Activated naive CD8-positive, alpha-beta T cell treated with anti-CD3 and anti-CD28 coated beads, Interleukin-2, amount 10 ng/mL, durations not matched to agents 7 days and 5 days (primary cell): ENCODE measurements at regions of chr1 and their contacts with region 1.

Region 1: GRCh38 chr1:8878448-8879347 is at the start of gene ENO1:
- DNase-seq: peak; percentile 100
- ATAC-seq: peak; percentile 80
- H3K4me3 Mint-ChIP-seq: peak within 1 kb of the TSS; percentile 96
- H3K27ac Mint-ChIP-seq: peak within 1 kb of the TSS; percentile 98
- H3K4me1 Mint-ChIP-seq: peaks cover 30% of the 10 kb centered on the region
- H3K27me3 Mint-ChIP-seq: no peaks in the 10 kb centered on the region
- total RNA-seq, gene ENO1: 2,428 to 2,545 TPM

Region 2: GRCh38 chr1:8789314-8790214 is 89.1 kb before region 1 on chr1:
- POLR2A ChIA-PET with region 1: no interaction called
- DNase-seq: no peak
- ATAC-seq: no peak
- H3K4me3 Mint-ChIP-seq: no peak overlapping the region
- H3K27ac Mint-ChIP-seq: no peak overlapping the region
- H3K4me1 Mint-ChIP-seq: peaks cover 3% of the 10 kb centered on the region
- H3K27me3 Mint-ChIP-seq: no peaks in the 10 kb centered on the region

Region 3: DNA sequence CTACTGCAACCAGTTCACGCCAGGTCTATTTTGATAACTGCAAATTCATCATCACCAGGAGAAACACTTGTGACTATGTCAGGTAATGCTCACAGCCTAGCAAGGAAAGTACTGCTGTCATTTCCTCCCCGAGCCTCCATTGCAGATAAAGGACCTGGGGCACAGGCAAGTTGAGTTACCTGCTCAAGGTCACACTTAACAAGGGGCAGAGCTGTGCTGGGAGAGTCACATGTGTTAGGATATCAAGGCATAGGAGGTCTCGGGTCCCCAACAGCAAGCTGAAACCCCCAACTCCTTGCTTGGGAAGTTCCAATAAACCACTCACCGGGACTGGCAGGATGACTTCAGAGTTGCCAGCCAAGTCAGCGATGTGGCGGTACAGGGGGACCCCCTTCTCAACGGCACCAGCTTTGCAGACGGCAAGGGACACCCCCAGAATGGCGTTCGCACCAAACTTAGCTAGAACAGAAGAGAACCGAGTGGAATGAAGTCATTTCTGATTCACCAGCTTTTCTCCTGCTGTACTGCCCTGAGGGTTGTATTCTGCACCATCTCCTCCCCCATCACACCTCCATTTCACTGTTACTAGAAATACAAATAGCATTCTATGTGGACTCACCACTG is 11.8 kb before region 1 on chr1:
- POLR2A ChIA-PET with region 1: interaction called, 22 read pairs
- DNase-seq: no peak
- ATAC-seq: no peak
- H3K4me3 Mint-ChIP-seq: peak overlapping the region; percentile 20
- H3K27ac Mint-ChIP-seq: peak overlapping the region; percentile 79
- H3K4me1 Mint-ChIP-seq: peaks cover 51% of the 10 kb centered on the region
- H3K27me3 Mint-ChIP-seq: no peaks in the 10 kb centered on the region

Region 4: DNA sequence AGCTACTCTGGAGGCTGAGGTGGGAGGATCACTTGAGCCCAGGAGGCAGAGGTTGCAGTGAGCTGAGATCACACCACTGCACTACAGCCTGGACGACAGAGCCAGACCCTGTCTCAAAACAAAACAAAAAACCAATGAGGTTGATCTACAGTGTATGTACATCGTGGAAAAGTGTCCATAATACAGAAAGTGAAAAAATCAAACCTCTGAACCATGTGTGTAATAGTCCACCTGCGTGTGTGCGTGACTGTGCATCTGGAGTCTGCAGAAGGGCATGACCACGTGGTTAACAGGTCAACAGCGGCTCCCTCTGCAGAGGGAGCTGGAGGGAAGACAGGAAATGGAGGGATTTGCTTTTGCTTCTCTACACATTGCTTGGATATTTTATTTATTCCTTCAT is 32.2 kb after region 1 on chr1:
- POLR2A ChIA-PET with region 1: interaction called, 14 read pairs
- DNase-seq: no peak
- ATAC-seq: no peak
- H3K4me3 Mint-ChIP-seq: no peak overlapping the region
- H3K27ac Mint-ChIP-seq: peak overlapping the region; percentile 79
- H3K4me1 Mint-ChIP-seq: peaks cover 47% of the 10 kb centered on the region
- H3K27me3 Mint-ChIP-seq: no peaks in the 10 kb centered on the region

Region 5: GRCh38 chr1:8941906-8942305 is 63.2 kb after region 1 on chr1:
- POLR2A ChIA-PET with region 1: interaction called, 95 read pairs
- DNase-seq: no peak
- ATAC-seq: no peak
- H3K4me3 Mint-ChIP-seq: peak overlapping the region; percentile 83
- H3K27ac Mint-ChIP-seq: peak overlapping the region; percentile 93
- H3K4me1 Mint-ChIP-seq: peaks cover 83% of the 10 kb centered on the region
- H3K27me3 Mint-ChIP-seq: no peaks in the 10 kb centered on the region

Region 6: GRCh38 chr1:8987881-8988617 is 109.4 kb after region 1 on chr1:
- POLR2A ChIA-PET with region 1: interaction called, 23 read pairs
- DNase-seq: peak; percentile 85
- ATAC-seq: peak; percentile 53
- H3K4me3 Mint-ChIP-seq: peak overlapping the region; percentile 73
- H3K27ac Mint-ChIP-seq: peak overlapping the region; percentile 91
- H3K4me1 Mint-ChIP-seq: peaks cover 37% of the 10 kb centered on the region
- H3K27me3 Mint-ChIP-seq: peaks cover 2% of the 10 kb centered on the region